Caco-2 (cell line): ENCODE measurements at regions of chr14 and their contacts with region 1.

Region 1: GRCh38 chr14:64698903-64699302 is 5.3 kb upstream of the PLEKHG3 start:
- DNase-seq: peak; percentile 79 to 87
- H3K4me3 ChIP-seq: no peak overlapping the region
- H3K4me3 Mint-ChIP-seq: peak overlapping the region; percentile 19
- H3K27ac Mint-ChIP-seq: no peak overlapping the region
- H3K4me1 ChIP-seq: peaks cover 32% of the 10 kb centered on the region
- H3K4me1 Mint-ChIP-seq: peaks cover 48% of the 10 kb centered on the region
- H3K27me3 ChIP-seq: no peaks in the 10 kb centered on the region; the same call in 1 of the 2 replicates
- H3K27me3 Mint-ChIP-seq: no peaks in the 10 kb centered on the region
- CTCF ChIP-seq: no peak

Region 2: DNA sequence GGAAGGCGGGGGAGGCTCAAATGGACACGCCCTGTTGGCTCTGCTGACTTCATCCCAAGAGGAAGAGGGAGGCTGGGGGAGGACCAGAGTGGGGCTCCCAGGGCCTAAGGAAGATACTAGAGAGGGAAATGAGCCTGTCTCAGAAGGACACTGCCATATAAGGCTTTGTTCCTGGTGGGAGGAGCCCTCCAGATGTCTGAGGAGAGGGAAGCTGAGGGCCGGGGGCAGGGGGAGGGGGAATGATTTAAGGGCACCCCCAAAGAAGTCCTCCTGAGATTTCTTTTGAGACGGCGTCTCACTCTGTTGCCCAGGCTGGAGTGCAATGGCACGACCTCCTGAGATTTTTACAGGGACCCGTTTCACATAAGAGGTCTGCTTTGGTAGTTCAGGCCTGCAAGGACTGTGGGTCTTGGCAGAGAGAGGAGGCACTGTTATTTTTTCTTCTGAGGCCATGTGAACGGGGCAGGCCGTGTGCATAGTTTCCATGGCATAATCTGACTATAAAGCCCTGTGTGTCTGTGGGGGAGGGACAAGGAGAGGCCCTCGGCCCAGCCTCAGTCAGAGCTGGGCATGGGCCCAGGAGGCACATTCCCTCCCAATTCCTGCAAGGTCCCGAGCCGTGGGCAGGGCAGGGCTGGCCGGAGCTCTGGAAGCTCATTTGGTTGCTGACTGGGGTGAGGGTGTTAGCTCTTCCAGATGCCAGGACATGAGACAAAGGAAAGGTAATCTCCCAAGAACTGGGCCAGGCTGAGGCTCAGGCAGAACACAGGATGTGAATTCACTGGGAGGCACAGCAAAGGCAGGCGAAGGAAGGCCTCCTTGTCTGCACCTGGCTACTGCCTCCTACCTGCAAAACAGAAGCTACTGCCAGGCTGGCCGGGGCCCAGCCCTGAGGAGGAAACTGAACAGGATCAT is 16.9 kb before region 1 on chr14:
- CTCF ChIA-PET with region 1: no interaction called
- POLR2A ChIA-PET with region 1: interaction called, 4 read pairs
- intact Hi-C with region 1: loop called (anchors 1 kb)
- DNase-seq: no peak
- H3K4me3 ChIP-seq: no peak overlapping the region
- H3K4me3 Mint-ChIP-seq: no peak overlapping the region
- H3K27ac Mint-ChIP-seq: peak overlapping the region; percentile 50
- H3K4me1 ChIP-seq: peaks cover 26% of the 10 kb centered on the region
- H3K4me1 Mint-ChIP-seq: peaks cover 18% of the 10 kb centered on the region
- H3K27me3 ChIP-seq: no peaks in the 10 kb centered on the region
- H3K27me3 Mint-ChIP-seq: no peaks in the 10 kb centered on the region
- CTCF ChIP-seq: no peak

Region 3: GRCh38 chr14:64758691-64759584 is 60.0 kb after region 1 on chr14:
- CTCF ChIA-PET with region 1: interaction called, 7 read pairs
- POLR2A ChIA-PET with region 1: interaction called, 8 read pairs
- intact Hi-C with region 1: loop called (anchors 1 kb)
- DNase-seq: peak; percentile 91 to 94
- H3K4me3 ChIP-seq: no peak overlapping the region
- H3K4me3 Mint-ChIP-seq: peak overlapping the region; percentile 51
- H3K27ac Mint-ChIP-seq: peak overlapping the region; percentile 92
- H3K4me1 ChIP-seq: peaks cover 83% of the 10 kb centered on the region
- H3K4me1 Mint-ChIP-seq: peaks cover 75% of the 10 kb centered on the region
- H3K27me3 ChIP-seq: no peaks in the 10 kb centered on the region
- H3K27me3 Mint-ChIP-seq: no peaks in the 10 kb centered on the region
- CTCF ChIP-seq: no peak

Region 4: DNA sequence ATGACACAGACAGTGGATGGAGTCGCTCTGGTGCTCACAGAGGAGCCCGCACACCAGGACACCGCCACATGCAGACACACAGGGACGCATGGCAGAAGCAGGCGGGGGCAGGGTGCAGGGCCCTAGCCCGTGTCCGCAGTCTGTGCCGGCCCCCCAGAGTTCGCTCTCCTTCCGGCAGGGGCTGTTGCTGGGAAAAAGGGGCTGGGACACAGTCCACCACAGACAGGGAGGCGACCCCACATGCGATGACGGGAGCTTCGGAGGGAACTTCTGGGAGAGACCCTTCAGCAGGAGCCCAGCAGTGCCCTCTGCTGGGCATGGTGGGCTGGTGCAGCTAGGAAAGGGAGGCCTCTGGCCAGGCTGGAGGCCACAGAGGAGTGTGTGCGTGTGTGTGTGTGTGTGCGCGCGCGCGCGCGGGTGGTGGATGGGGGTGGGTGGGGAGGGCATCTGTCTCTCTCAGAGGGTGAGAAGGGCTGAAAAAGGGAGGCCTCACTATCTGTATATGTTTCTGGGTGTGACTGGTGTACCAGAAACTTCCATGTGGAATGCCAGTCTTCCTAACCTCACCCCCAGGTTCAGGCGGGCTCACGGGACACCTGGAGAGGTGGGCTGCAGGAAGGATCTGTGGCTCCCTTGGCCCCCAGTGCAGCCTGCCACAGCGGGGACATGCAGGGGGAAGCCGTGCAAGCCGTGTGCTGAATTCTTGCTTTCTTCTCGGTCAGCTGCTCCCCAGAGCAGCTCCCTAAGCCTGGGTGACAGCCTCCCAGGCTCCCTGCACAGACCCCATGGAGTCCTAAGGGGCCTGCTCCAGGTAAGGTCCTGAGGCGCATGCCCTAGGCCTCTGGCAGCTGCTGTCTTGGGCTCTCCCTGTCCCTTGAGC is 66.0 kb after region 1 on chr14:
- CTCF ChIA-PET with region 1: interaction called, 10 read pairs
- POLR2A ChIA-PET with region 1: no interaction called
- intact Hi-C with region 1: no loop called
- DNase-seq: peak; percentile 76 to 86
- H3K4me3 ChIP-seq: no peak overlapping the region
- H3K4me3 Mint-ChIP-seq: peak overlapping the region; percentile 30
- H3K27ac Mint-ChIP-seq: peak overlapping the region; percentile 19
- H3K4me1 ChIP-seq: peaks cover 37% of the 10 kb centered on the region
- H3K4me1 Mint-ChIP-seq: peaks cover 40% of the 10 kb centered on the region
- H3K27me3 ChIP-seq: no peaks in the 10 kb centered on the region
- H3K27me3 Mint-ChIP-seq: no peaks in the 10 kb centered on the region
- CTCF ChIP-seq: peak; percentile 89 to 93

Region 5: DNA sequence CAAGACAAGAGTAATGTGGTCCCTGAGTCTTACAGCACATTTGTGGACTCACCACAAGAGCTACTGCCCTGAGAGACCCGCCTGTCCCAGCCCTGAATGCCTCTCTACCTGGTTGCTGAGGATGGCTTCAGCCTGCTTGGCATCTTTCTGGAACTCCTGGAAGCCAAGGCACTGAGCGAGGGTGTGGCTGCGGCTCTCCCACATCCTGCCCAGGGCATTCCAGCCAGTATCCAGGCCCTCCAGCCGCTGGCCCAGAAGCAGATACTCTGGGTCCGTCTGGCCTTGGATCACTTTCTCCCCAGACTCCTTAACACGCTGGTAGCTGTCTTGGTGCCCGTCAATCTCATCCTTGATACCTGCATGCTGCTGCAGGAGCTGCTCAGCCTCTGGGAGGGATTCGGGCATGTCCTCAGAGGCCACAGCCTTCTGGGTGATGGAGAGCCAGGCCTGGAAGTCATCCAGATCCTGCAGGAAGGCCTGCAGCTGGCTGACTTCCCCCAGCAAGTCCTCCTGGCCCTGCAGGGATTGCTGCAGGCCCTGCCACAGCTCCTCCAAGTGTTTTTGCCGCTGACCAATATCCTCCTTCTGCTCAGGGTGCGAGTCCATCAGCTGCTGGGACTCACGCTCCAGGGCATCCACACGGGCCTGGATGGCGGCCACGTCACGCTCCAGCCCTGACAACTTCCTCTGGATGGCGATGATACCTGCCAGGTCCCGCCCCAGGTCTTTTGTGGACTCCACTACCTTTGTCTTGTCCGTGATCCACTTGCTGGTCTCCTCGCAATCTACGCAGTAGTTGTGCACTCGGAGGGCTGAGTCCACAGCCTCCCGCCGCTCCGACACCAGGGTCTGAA is 87.6 kb after region 1 on chr14:
- CTCF ChIA-PET with region 1: no interaction called
- POLR2A ChIA-PET with region 1: no interaction called
- intact Hi-C with region 1: no loop called
- DNase-seq: no peak
- H3K4me3 ChIP-seq: no peak overlapping the region
- H3K4me3 Mint-ChIP-seq: no peak overlapping the region
- H3K27ac Mint-ChIP-seq: no peak overlapping the region
- H3K4me1 ChIP-seq: no peaks in the 10 kb centered on the region
- H3K4me1 Mint-ChIP-seq: no peaks in the 10 kb centered on the region
- H3K27me3 ChIP-seq: no peaks in the 10 kb centered on the region
- H3K27me3 Mint-ChIP-seq: no peaks in the 10 kb centered on the region
- CTCF ChIP-seq: no peak

Region 6: DNA sequence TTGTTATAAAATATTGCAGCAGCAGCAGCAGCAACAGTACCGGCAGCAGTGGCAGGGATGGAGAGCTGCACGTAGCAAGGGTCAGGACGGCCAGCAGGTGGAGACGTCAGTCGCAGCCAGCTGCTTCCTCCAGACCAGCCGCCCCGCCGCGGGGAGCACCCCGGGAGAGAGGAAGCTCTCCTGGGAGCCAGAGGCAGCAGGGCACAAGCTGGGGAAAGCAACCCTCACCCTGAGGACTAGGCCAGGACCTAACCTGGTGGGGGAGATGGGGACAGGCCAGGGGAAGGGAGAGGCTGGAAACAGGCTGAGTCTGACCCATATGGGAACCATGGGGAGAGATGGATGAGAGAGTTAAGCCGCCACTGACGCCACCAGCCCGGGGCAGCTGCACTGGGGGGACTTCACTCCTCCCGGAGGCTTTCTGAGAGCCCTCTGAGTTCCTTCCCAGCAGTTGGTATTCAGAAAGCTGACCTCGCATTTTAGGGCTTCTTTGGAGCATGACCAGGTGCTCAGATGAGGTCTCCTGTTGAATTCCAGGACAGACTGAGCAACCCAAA is 124.5 kb after region 1 on chr14:
- CTCF ChIA-PET with region 1: no interaction called
- POLR2A ChIA-PET with region 1: no interaction called
- intact Hi-C with region 1: no loop called
- DNase-seq: peak; percentile 79 to 85
- H3K4me3 ChIP-seq: no peak overlapping the region
- H3K4me3 Mint-ChIP-seq: no peak overlapping the region
- H3K27ac Mint-ChIP-seq: no peak overlapping the region
- H3K4me1 ChIP-seq: no peaks in the 10 kb centered on the region
- H3K4me1 Mint-ChIP-seq: no peaks in the 10 kb centered on the region
- H3K27me3 ChIP-seq: no peaks in the 10 kb centered on the region
- H3K27me3 Mint-ChIP-seq: peaks cover 3% of the 10 kb centered on the region
- CTCF ChIP-seq: peak; percentile 72 to 90